ENCODE measurements at regions of chr7 and their contacts with region 1.

Region 1: GRCh38 chr7:90720984-90721760 is 125.1 kb downstream of the CDK14 start:
- DNase-seq: no peak
- ATAC-seq: peak; percentile 79

Region 2: GRCh38 chr7:90595801-90596671 is 125.1 kb before region 1 on chr7 and contains the start of gene CDK14:
- intact Hi-C with region 1: loop called (anchors 5 kb)
- DNase-seq: peak; percentile 95
- ATAC-seq: peak; percentile 85
- total RNA-seq, gene CDK14: 26.3 TPM

Region 3: GRCh38 chr7:90666186-90666585 is 55.0 kb before region 1 on chr7:
- intact Hi-C with region 1: loop called (anchors 5 kb)
- DNase-seq: no peak
- ATAC-seq: no peak

Region 4: DNA sequence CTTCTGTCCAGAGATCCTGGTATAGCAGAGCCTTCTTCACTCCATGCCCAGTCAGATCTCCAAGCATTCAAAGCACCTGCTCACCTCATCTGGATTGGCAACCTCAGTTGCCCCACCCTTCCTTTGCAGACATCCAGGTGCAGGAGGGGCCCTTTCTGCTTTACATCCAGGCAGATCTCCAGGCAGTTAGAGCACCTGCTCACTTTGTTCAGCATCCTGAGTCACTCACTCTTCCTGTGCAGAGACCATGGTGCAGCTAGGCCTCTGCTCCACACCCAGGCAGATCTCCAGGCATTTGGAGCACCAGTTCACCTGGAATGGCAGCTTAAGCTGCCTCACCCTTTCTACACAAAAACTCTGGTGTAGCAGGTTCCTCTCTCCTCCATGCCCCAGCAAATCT is 28.1 kb after region 1 on chr7:
- intact Hi-C with region 1: no loop called
- DNase-seq: no peak
- ATAC-seq: no peak

Region 5: GRCh38 chr7:91596287-91596852 is 875.2 kb after region 1 on chr7:
- intact Hi-C with region 1: no loop called
- DNase-seq: no peak
- ATAC-seq: no peak